ENCODE measurements at regions of chr3 and their contacts with region 1.

Region 1: DNA sequence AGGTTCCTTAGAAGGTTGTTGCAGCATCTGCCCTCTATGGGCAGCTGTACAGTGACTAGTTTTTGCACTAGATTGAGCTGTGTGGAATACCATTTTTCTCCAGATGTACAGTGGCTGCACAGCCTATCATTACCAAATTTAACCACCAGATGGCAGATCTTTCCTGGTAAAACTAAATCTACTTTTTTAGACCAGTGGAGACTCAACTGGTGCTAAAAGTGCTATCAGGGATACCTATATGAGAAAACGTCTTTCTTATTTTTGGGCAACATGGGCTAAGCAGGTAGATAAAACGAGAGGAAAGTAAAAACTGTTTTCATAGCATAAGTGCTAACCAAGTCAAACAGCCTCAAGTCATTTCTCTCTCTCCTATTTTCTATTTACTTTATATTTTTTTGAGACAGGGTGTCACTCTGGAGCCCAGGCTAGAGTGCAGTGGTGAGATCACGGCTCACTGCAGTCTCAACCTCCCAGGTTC is 21.2 kb downstream of the IGSF10 start:
- ATAC-seq: peak; percentile 54 to 88 (median 64)
- H3K4me3 ChIP-seq: no peak overlapping the region
- H3K27ac ChIP-seq: no peak overlapping the region
- H3K4me1 ChIP-seq: no peaks in the 10 kb centered on the region

Region 2: GRCh38 chr3:151093905-151094304 is 345.8 kb before region 1 on chr3:
- in situ Hi-C with region 1: no loop called
- ATAC-seq: no peak
- H3K4me3 ChIP-seq: no peak overlapping the region
- H3K27ac ChIP-seq: no peak overlapping the region
- H3K4me1 ChIP-seq: no peaks in the 10 kb centered on the region

Region 3: DNA sequence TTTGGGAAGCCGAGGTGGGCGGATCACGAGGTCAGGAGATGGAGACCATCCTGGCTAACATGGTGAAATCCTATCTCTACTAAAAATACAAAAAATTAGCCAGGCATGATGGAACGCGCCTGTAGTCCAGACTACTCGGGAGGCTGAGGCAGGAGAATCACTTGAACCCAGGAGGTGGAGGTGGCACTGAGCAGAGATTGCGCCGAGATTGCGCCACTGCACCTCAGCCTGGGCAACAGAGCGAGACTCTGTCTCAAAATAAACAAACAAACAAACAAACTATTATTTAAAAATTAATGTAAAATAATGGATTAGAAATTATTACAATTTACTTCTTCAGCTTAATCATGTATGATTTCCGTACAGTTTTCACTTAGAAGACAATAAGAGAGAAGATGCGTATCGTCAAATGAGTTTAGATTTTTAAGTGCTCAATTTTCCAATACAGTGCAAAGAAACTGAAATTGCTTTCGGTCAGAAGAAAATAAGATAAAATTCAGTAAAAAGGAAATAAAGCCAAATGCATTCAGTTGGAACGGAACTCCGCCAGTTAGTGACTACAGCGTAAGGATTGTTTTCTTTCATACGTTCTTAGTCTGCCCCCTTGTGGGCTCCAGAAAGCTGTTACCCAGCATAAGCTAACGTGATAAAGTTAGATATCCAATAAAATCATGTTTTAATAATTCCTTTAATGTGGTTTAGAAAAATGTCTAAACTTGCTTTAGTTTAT is 399.1 kb after region 1 on chr3:
- in situ Hi-C with region 1: loop called in 6 of 9 experiments (anchors 10 to 25 kb)
- ATAC-seq: peak; percentile 54 to 95 (median 80)
- H3K4me3 ChIP-seq: no peak overlapping the region
- H3K27ac ChIP-seq: no peak overlapping the region
- H3K4me1 ChIP-seq: peaks cover 0 to 5% of the 10 kb centered on the region in 2 donors

Region 4: DNA sequence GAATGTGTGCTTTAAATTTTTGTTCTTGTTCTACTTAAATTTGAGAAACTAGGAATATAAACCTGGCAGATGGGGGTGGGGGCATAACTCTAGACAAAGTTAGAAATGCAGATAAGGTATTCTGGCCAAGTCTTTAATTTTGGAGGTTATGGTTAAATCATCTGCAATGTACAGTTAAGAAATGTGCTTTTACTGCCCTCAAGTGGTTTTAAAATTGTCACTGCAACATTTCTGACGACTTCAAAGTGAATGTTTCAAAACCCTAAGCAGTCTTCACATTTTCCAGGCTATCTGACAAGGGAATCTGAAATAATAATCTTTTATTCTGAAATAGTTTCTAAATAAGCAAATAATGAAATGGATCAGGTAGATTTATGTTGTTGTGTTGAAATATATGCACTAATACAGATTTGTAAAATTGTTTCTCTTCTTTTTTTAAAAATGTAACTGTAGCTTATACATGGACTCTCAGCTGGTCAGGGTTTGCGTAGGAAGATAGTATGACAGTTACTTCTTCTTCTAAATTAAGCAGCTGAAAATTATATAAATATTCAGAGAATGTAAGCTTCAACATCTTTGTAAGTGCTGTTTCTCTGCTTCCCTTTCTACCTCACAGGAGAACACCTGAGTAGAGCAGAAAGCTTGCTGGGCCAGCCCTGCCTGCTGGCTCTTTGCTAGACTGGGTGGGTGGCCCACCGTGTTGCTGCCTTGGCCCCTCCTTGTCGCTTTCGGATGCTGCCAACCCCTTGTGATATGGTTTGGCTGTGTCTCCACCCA is 478.8 kb after region 1 on chr3:
- in situ Hi-C with region 1: loop called in 1 of 9 experiments (anchors 25 kb)
- ATAC-seq: peak in 4 of 8 experiments; percentile 47 to 71 (median 66)
- H3K4me3 ChIP-seq: no peak overlapping the region
- H3K27ac ChIP-seq: no peak overlapping the region
- H3K4me1 ChIP-seq: no peaks in the 10 kb centered on the region

Measured in motor neuron (in vitro differentiated cells).